IMR-90 (cell line): ENCODE measurements at regions of chr2 and their contacts with region 1.

Region 1: DNA sequence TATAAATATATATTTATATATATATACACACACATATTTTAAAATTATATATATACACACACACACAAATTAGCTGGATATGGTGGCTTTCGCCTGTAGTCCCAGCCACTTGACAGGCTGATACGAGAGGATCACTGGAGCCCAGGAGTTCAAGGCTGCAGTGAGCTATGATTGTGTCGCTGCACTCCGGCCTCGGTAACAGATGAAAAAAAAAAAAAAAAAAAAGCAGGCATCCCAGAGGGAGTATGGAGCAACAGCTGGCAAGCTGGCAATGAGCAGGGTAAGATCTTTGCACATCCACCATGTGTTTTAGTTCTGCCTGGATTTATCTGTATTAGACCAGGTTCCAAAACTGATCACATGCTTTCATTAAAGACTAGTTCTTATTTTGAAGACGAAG is 170.1 kb downstream of the MAP2 start:
- DNase-seq: no peak
- ATAC-seq: no peak
- H3K4me3 ChIP-seq: no peak overlapping the region
- H3K27ac ChIP-seq: no peak overlapping the region
- H3K4me1 ChIP-seq: no peaks in the 10 kb centered on the region
- H3K27me3 ChIP-seq: no peaks in the 10 kb centered on the region
- CTCF ChIP-seq: no peak
- POLR2A ChIP-seq: no peak
- RAD21 ChIP-seq: no peak

Region 2: DNA sequence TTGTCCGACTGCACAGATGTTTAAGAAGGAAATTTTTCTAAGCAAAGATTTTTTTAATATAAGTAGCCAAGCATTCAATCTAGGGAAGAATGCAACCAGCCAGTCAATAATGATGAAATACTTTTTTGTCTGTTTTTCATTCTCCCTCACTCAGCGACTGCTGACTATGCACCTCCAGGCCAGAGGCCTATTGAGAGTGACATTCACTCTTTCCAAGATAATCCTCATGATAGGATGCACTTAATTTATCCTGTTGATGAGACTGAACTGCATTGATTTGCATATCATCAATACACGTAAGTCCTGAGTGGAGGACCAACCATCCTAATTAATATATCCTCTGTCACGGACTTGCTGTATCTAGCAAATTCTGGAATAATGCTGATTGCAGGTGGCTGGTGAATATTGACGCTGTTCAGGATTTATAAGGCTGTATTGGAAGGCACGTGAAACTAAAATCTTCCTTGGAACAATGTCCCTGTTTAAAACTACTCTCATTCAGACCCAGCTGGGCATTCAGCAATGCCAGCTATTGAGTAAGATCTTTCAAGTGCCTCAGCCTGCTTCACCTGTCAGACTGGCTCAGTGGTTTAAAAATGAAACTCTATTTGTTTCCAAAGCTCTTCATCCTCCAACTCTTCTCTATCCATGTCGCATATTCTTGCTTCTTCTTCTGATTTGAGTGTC is 27.9 kb before region 1 on chr2:
- CTCF ChIA-PET with region 1: no interaction called
- POLR2A ChIA-PET with region 1: no interaction called
- dilution Hi-C with region 1: no loop called
- in situ Hi-C with region 1: no loop called
- intact Hi-C with region 1: no loop called
- DNase-seq: no peak
- ATAC-seq: no peak
- H3K4me3 ChIP-seq: no peak overlapping the region
- H3K27ac ChIP-seq: no peak overlapping the region
- H3K4me1 ChIP-seq: no peaks in the 10 kb centered on the region
- H3K27me3 ChIP-seq: no peaks in the 10 kb centered on the region
- CTCF ChIP-seq: no peak
- POLR2A ChIP-seq: no peak
- RAD21 ChIP-seq: no peak

Region 3: DNA sequence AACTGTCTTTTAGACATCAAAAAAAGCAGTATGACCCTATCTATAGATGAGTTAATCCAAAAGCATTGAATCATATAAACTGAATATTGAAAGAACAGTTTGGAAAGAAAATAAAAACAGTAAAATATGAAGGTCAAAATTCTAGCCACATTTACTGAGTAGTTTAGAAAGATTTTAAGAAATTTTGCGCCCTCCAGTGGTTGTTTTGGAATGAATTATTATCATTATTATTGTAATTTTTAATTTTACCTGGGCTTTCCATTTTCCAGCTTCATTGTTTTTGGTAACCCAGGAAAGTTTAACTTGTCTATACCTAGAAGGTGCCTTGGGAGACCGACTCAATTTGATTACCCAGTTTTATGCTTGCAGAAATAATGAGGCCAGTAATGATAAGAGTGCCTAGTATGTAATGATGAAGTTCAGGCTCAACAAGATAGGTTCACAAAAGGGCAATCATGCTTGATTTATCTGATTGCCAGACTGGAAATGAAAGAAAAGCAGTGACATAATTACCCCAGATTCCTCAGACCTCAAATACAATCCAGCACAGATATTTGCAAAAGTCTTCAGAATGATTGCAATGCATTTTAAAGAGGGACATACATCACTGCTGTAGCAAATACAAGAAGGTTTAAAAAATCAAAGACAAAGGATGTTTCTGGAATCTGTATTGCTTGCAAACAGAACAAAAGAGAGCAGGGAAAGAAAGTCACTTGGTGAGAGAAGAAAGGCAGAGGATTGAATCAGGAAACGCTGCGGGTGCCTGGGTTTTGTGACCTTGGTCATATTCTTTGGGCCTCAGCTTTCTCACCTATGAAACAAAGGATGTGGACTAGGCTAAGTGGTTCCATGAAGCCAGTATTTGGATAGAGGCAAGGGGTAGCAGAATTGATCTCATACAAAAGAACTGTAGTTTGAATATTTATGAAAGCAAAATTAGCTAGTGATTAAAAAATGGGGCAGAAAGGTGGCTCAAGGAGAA is 16.3 kb before region 1 on chr2:
- CTCF ChIA-PET with region 1: no interaction called
- POLR2A ChIA-PET with region 1: interaction called, 11 read pairs
- dilution Hi-C with region 1: no loop called
- in situ Hi-C with region 1: no loop called
- intact Hi-C with region 1: no loop called
- DNase-seq: peak; percentile 6
- ATAC-seq: no peak
- H3K4me3 ChIP-seq: no peak overlapping the region
- H3K27ac ChIP-seq: no peak overlapping the region
- H3K4me1 ChIP-seq: no peaks in the 10 kb centered on the region
- H3K27me3 ChIP-seq: no peaks in the 10 kb centered on the region
- CTCF ChIP-seq: peak; percentile 52
- POLR2A ChIP-seq: no peak
- RAD21 ChIP-seq: peak; percentile 27; the same call in 1 of the 2 replicates